Naive thymus-derived CD4-positive, alpha-beta T cell (primary cell): ENCODE measurements at regions of chr3 and their contacts with region 1.

Region 1: GRCh38 chr3:179147873-179148615 is at the start of gene PIK3CA:
- DNase-seq: peak; percentile 71 to 99 (median 95)
- ATAC-seq: peak; percentile 88
- H3K4me3 ChIP-seq: peak within 1 kb of the TSS; percentile 87
- H3K4me3 Mint-ChIP-seq: peak within 1 kb of the TSS in 7 of 10 donors; percentile 95 to 100 (median 97)
- H3K27ac ChIP-seq: peak within 1 kb of the TSS; percentile 93
- H3K27ac Mint-ChIP-seq: peak within 1 kb of the TSS in 8 of 9 donors; percentile 94 to 99 (median 96)
- H3K4me1 ChIP-seq: peaks cover 15 to 17% of the 10 kb centered on the region in 2 donors
- H3K4me1 Mint-ChIP-seq: peaks cover 27 to 47% (median 41%) of the 10 kb centered on the region in 7 donors
- H3K27me3 ChIP-seq: no peaks in the 10 kb centered on the region
- H3K27me3 Mint-ChIP-seq: peaks cover 0 to 21% (median 0%) of the 10 kb centered on the region in 5 donors
- total RNA-seq, gene PIK3CA: 27.4 to 58.1 (median 43.7) TPM

Region 2: GRCh38 chr3:179071550-179072397 is 76.3 kb before region 1 on chr3 and contains the start of gene ZMAT3:
- CTCF ChIA-PET with region 1: interaction called, 4 read pairs
- POLR2A ChIA-PET with region 1: interaction called, 32 read pairs
- intact Hi-C with region 1: loop called (anchors 1 kb)
- DNase-seq: peak; percentile 72 to 88 (median 83)
- ATAC-seq: peak; percentile 88
- H3K4me3 ChIP-seq: peak within 1 kb of the TSS; percentile 74
- H3K4me3 Mint-ChIP-seq: peak within 1 kb of the TSS; percentile 97 to 100 (median 98)
- H3K27ac ChIP-seq: peak within 1 kb of the TSS; percentile 87
- H3K27ac Mint-ChIP-seq: peak within 1 kb of the TSS; percentile 89 to 98 (median 95)
- H3K4me1 ChIP-seq: peaks cover 13 to 18% of the 10 kb centered on the region in 2 donors
- H3K4me1 Mint-ChIP-seq: peaks cover 24 to 81% (median 59%) of the 10 kb centered on the region in 7 donors
- H3K27me3 ChIP-seq: no peaks in the 10 kb centered on the region
- H3K27me3 Mint-ChIP-seq: no peaks in the 10 kb centered on the region
- total RNA-seq, gene ZMAT3: 20.6 to 23.7 (median 21.7) TPM

Region 3: GRCh38 chr3:179181021-179181472 is 33.0 kb after region 1 on chr3:
- CTCF ChIA-PET with region 1: interaction called, 3 read pairs
- POLR2A ChIA-PET with region 1: interaction called, 4 read pairs
- intact Hi-C with region 1: loop called in 1 of 2 experiments (anchors 1 kb)
- DNase-seq: no peak
- ATAC-seq: no peak
- H3K4me3 ChIP-seq: no peak overlapping the region
- H3K4me3 Mint-ChIP-seq: peak overlapping the region in 2 of 10 donors; percentile 19 to 34
- H3K27ac ChIP-seq: no peak overlapping the region
- H3K27ac Mint-ChIP-seq: no peak overlapping the region
- H3K4me1 ChIP-seq: peaks cover 7 to 27% of the 10 kb centered on the region in 2 donors
- H3K4me1 Mint-ChIP-seq: peaks cover 25 to 59% (median 45%) of the 10 kb centered on the region in 7 donors
- H3K27me3 ChIP-seq: no peaks in the 10 kb centered on the region
- H3K27me3 Mint-ChIP-seq: no peaks in the 10 kb centered on the region

Region 4: GRCh38 chr3:179322286-179323196 is 174.5 kb after region 1 on chr3 and contains the start of gene ZNF639:
- CTCF ChIA-PET with region 1: interaction called, 22 read pairs
- POLR2A ChIA-PET with region 1: interaction called, 64 read pairs
- intact Hi-C with region 1: loop called (anchors 1 kb)
- DNase-seq: peak; percentile 80 to 89 (median 85)
- ATAC-seq: peak; percentile 94
- H3K4me3 ChIP-seq: peak within 1 kb of the TSS; percentile 93
- H3K4me3 Mint-ChIP-seq: peak within 1 kb of the TSS; percentile 88 to 96 (median 94)
- H3K27ac ChIP-seq: peak within 1 kb of the TSS; percentile 98
- H3K27ac Mint-ChIP-seq: peak within 1 kb of the TSS; percentile 81 to 98 (median 93)
- H3K4me1 ChIP-seq: peaks cover 9 to 22% of the 10 kb centered on the region in 2 donors
- H3K4me1 Mint-ChIP-seq: peaks cover 22 to 48% (median 37%) of the 10 kb centered on the region in 7 donors
- H3K27me3 ChIP-seq: no peaks in the 10 kb centered on the region
- H3K27me3 Mint-ChIP-seq: peaks cover 0 to 16% (median 0%) of the 10 kb centered on the region in 5 donors
- total RNA-seq, gene ZNF639: 33.1 to 74.9 (median 46.0) TPM

Region 5: GRCh38 chr3:179604321-179605078 is 456.5 kb after region 1 on chr3 and contains the starts of genes MRPL47 and NDUFB5:
- CTCF ChIA-PET with region 1: no interaction called
- POLR2A ChIA-PET with region 1: interaction called, 5 read pairs
- intact Hi-C with region 1: loop called (anchors 1 kb)
- DNase-seq: peak; percentile 76 to 95 (median 92)
- ATAC-seq: peak; percentile 100
- H3K4me3 ChIP-seq: peak within 1 kb of the TSS; percentile 95
- H3K4me3 Mint-ChIP-seq: peak within 1 kb of the TSS; percentile 95 to 99 (median 99)
- H3K27ac ChIP-seq: peak within 1 kb of the TSS; percentile 90
- H3K27ac Mint-ChIP-seq: peak within 1 kb of the TSS; percentile 98 to 100 (median 99)
- H3K4me1 ChIP-seq: peaks cover 15 to 25% of the 10 kb centered on the region in 2 donors
- H3K4me1 Mint-ChIP-seq: peaks cover 23 to 65% (median 46%) of the 10 kb centered on the region in 7 donors
- H3K27me3 ChIP-seq: no peaks in the 10 kb centered on the region
- H3K27me3 Mint-ChIP-seq: no peaks in the 10 kb centered on the region
- total RNA-seq, gene MRPL47: 14.4 to 41.4 (median 18.5) TPM
- total RNA-seq, gene NDUFB5: 33.4 to 80.2 (median 62.8) TPM

Region 6: DNA sequence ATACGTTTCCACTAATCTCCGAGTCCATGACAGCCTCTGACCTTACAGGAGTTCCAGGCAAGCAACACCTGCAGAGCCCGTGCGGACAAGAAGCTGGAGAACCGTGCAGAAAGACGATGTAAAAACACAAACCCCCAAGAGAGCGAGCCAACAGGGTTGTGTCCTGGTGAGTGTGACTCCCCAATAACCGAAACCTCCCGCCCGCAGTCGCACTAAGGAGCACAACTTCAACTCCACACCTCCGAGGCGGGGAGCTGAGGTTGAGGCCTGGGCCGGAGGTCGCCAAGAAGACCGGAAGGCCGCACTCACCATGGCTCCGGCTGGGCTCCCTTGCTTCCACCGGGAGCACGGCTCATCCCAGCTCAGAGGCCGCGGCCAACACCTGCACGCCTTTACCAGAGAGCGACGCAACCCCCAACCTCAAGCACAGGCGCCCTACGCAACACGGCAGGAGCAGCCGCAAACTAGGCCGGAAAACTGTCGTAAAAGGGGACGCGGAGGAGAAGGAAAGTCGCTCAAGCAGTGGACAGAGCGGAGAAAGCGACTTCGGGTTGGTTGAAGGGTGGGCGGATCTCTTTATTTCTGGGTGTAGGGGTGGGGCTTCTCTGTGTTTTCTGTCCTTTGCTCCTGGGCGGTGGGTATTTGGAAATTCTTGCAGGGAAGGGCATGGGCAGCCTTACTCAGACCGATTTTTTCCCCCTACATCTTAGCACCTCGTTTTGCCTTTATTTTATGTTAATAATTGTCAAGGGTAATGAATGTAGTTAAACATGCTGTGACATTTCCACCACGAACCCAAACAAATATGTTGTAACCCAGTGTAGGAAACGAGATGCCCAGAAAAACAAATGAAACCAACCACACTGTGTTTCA is 1841.5 kb after region 1 on chr3 and contains the start of gene DNAJC19:
- CTCF ChIA-PET with region 1: no interaction called
- POLR2A ChIA-PET with region 1: no interaction called
- intact Hi-C with region 1: loop called in 1 of 2 experiments (anchors 1 kb)
- DNase-seq: peak; percentile 69 to 94 (median 93)
- ATAC-seq: peak; percentile 99
- H3K4me3 ChIP-seq: peak within 1 kb of the TSS; percentile 78
- H3K4me3 Mint-ChIP-seq: peak within 1 kb of the TSS; percentile 91 to 99 (median 97)
- H3K27ac ChIP-seq: peak within 1 kb of the TSS; percentile 80
- H3K27ac Mint-ChIP-seq: peak within 1 kb of the TSS; percentile 90 to 99 (median 96)
- H3K4me1 ChIP-seq: peaks cover 15 to 23% of the 10 kb centered on the region in 2 donors
- H3K4me1 Mint-ChIP-seq: peaks cover 15 to 58% (median 44%) of the 10 kb centered on the region in 7 donors
- H3K27me3 ChIP-seq: no peaks in the 10 kb centered on the region
- H3K27me3 Mint-ChIP-seq: peaks cover 0 to 7% (median 0%) of the 10 kb centered on the region in 5 donors
- total RNA-seq, gene DNAJC19: 20.7 to 74.1 (median 40.2) TPM